Activated CD4-positive, alpha-beta T cell treated with anti-CD3 and anti-CD28 coated beads for 36 hours (primary cell): ENCODE measurements at regions of chr1 and their contacts with region 1.

Region 1: DNA sequence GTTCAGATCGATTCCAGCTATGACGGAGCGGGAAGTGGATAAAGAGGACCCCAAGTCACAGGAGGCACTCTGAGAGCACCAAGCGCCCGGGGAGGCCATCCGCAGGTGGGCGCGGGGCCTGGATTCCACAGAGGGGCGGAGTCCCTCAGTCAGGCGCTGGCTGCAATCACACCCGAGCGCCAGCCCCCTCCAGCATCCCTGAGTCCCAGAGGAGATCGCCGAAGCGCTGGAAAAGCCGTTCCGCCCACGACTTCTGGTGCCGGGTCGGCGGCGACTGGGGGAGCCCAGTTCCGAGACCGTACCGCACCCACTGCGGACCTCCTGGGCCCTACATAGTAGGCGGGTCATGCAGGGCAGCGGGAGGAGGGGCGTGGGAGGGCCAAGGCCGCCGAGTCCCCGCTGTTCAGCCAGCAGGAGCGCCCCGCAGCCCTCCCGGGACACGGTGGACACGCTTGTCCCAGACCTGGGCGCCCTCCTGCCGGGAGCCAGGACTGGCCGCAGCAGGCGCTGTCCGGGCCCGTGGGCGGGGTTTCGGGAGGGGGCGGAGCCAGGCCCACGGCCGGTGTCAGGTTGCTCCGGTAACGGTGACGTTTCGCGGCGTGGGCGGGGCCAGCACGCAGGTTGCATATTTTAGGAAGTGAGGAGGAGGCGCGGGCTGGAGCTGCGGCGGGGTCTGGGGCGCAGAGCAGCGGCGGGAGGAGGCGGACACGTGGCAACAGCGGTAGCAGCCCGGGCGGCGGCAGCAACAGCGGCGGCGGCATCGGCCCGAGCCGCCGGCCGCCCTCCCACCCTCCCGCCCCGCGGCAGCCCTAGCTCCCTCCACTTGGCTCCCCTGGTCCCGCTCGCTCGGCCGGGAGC is at the start of gene ATP1A1:
- DNase-seq: peak; percentile 99
- ATAC-seq: peak; percentile 55
- H3K4me3 Mint-ChIP-seq: peak within 1 kb of the TSS; percentile 93
- H3K27ac Mint-ChIP-seq: peak within 1 kb of the TSS; percentile 98
- H3K4me1 Mint-ChIP-seq: peaks cover 33% of the 10 kb centered on the region
- H3K27me3 Mint-ChIP-seq: no peaks in the 10 kb centered on the region
- total RNA-seq, gene ATP1A1: 247 to 257 TPM

Region 2: GRCh38 chr1:115524236-115524635 is 848.6 kb before region 1 on chr1:
- CTCF ChIA-PET with region 1: no interaction called
- POLR2A ChIA-PET with region 1: no interaction called
- intact Hi-C with region 1: no loop called
- DNase-seq: no peak
- ATAC-seq: no peak
- H3K4me3 Mint-ChIP-seq: no peak overlapping the region
- H3K27ac Mint-ChIP-seq: no peak overlapping the region
- H3K4me1 Mint-ChIP-seq: no peaks in the 10 kb centered on the region
- H3K27me3 Mint-ChIP-seq: peaks cover 4% of the 10 kb centered on the region

Region 3: GRCh38 chr1:116151739-116152576 is 220.9 kb before region 1 on chr1:
- CTCF ChIA-PET with region 1: interaction called, 4 read pairs
- POLR2A ChIA-PET with region 1: no interaction called
- intact Hi-C with region 1: loop called (anchors 1 to 2 kb)
- DNase-seq: peak; percentile 87
- ATAC-seq: peak; percentile 98
- H3K4me3 Mint-ChIP-seq: peak overlapping the region; percentile 49
- H3K27ac Mint-ChIP-seq: peak overlapping the region; percentile 70
- H3K4me1 Mint-ChIP-seq: peaks cover 18% of the 10 kb centered on the region
- H3K27me3 Mint-ChIP-seq: peaks cover 4% of the 10 kb centered on the region

Region 4: GRCh38 chr1:116168277-116169097 is 204.3 kb before region 1 on chr1:
- CTCF ChIA-PET with region 1: no interaction called
- POLR2A ChIA-PET with region 1: no interaction called
- intact Hi-C with region 1: loop called in 1 of 2 experiments (anchors 1 kb)
- DNase-seq: peak; percentile 92
- ATAC-seq: peak; percentile 99
- H3K4me3 Mint-ChIP-seq: peak overlapping the region; percentile 60
- H3K27ac Mint-ChIP-seq: peak overlapping the region; percentile 79
- H3K4me1 Mint-ChIP-seq: peaks cover 10% of the 10 kb centered on the region
- H3K27me3 Mint-ChIP-seq: no peaks in the 10 kb centered on the region

Region 5: DNA sequence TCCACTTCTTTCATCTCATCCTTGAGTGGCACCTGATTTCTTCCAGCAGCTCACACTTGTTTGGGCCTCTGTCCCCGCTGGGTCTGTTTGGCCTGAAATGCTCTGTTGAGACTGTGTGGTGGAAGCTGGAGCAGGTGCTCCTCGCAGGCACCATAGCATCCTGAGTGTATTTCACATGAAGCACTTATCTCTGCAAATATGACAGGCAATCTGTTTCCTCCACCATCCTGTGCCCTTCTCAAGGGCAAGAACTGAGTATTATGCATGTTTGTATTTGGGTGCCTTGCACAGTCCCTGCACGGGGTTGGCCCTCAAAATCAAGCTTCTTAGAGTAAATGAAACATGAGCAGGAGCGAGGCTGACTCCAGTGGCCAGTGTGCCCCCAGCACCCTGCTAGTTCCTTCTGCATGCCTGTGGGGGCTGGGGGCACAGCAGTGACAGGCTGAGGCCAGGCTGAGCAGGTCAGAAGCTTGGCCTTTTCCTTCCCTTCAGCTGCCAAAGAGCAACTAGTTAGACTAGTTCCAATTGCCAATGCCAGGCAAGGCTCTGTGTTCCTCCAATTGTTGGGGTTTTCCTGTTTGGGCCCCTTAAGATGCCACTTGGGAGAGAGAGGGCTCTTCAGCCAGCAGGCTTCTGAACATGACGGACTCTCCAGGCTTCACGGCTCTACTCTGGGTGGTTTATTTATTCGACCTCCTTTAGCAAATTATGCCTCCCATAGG is 129.3 kb before region 1 on chr1:
- CTCF ChIA-PET with region 1: no interaction called
- POLR2A ChIA-PET with region 1: no interaction called
- intact Hi-C with region 1: no loop called
- DNase-seq: no peak
- ATAC-seq: no peak
- H3K4me3 Mint-ChIP-seq: no peak overlapping the region
- H3K27ac Mint-ChIP-seq: no peak overlapping the region
- H3K4me1 Mint-ChIP-seq: peaks cover 12% of the 10 kb centered on the region
- H3K27me3 Mint-ChIP-seq: no peaks in the 10 kb centered on the region

Region 6: GRCh38 chr1:116504308-116505156 is 131.7 kb after region 1 on chr1:
- CTCF ChIA-PET with region 1: interaction called, 4 read pairs
- POLR2A ChIA-PET with region 1: interaction called, 4 read pairs
- intact Hi-C with region 1: loop called (anchors 1 kb)
- DNase-seq: peak; percentile 89
- ATAC-seq: peak; percentile 86
- H3K4me3 Mint-ChIP-seq: peak overlapping the region; percentile 31
- H3K27ac Mint-ChIP-seq: peak overlapping the region; percentile 94
- H3K4me1 Mint-ChIP-seq: peaks cover 60% of the 10 kb centered on the region
- H3K27me3 Mint-ChIP-seq: no peaks in the 10 kb centered on the region

Region 7: GRCh38 chr1:117070124-117070523 is 697.3 kb after region 1 on chr1:
- CTCF ChIA-PET with region 1: no interaction called
- POLR2A ChIA-PET with region 1: no interaction called
- intact Hi-C with region 1: no loop called
- DNase-seq: no peak
- ATAC-seq: peak; percentile 83
- H3K4me3 Mint-ChIP-seq: no peak overlapping the region
- H3K27ac Mint-ChIP-seq: no peak overlapping the region
- H3K4me1 Mint-ChIP-seq: peaks cover 30% of the 10 kb centered on the region
- H3K27me3 Mint-ChIP-seq: no peaks in the 10 kb centered on the region